ENCODE measurements at regions of chr17 and their contacts with region 1.

Region 1: DNA sequence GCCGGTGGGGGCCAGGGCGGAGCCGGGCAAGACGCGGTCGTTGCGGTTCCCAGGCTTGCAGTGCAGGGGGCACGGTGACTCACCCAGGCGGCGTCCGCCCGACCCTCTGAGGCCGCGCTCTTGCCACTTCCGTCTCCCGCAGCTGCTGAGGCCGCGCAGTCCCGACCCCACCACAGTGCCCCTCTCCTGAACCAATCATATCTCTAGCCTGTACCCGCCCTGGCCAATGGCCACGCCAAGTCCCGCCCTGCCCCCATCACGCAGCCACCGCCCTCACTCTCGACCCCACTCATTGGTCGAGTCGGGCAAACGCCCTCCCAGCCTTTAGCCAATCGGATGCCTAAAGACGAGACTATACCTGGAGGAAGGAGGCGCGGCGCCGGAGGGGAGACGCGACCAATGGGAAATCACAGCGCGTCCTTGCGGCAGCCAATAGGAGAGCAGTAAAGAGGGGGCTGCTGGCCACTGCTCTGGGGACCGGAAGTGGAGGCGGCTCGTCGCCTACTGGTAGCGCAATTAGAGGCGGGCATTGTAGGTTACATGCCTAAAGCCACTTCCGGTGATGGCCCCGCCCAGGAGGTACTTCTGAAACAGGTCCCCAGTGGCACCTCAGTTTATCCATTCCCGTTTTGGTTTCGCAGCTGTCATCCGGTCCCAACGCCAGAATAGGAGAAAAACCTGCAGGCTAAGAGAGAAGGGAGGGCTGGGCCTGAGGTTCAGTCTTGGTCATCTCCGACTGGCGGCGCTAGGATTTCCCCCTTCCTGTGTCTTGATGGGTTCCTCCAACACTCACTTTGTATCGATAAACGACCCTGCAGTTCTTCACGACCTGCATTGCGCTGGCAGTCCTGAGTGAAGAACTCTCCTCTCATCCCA is 3.5 kb upstream of the MTMR4 start:
- DNase-seq: peak; percentile 100
- ATAC-seq: peak; percentile 84
- H3K4me3 ChIP-seq: peak overlapping the region; percentile 64
- H3K27ac ChIP-seq: peak overlapping the region; percentile 80
- H3K4me1 ChIP-seq: peaks cover 12% of the 10 kb centered on the region; the same call in 1 of the 2 replicates
- H3K27me3 ChIP-seq: no peaks in the 10 kb centered on the region
- CTCF ChIP-seq: no peak
- POLR2A ChIP-seq: 0 out of 2 replicates have a peak, but pooled peaks have one; percentile 42
- RAD21 ChIP-seq: no peak

Region 2: GRCh38 chr17:58352014-58352842 is 165.7 kb before region 1 on chr17 and contains the start of gene SUPT4H1:
- CTCF ChIA-PET with region 1: no interaction called
- POLR2A ChIA-PET with region 1: no interaction called
- dilution Hi-C with region 1: no loop called
- in situ Hi-C with region 1: no loop called
- intact Hi-C with region 1: loop called (anchors 5 kb)
- DNase-seq: peak; percentile 92
- ATAC-seq: peak; percentile 87
- H3K4me3 ChIP-seq: peak within 1 kb of the TSS; percentile 94
- H3K27ac ChIP-seq: peak within 1 kb of the TSS; percentile 94
- H3K4me1 ChIP-seq: no peaks in the 10 kb centered on the region
- H3K27me3 ChIP-seq: no peaks in the 10 kb centered on the region
- CTCF ChIP-seq: no peak
- POLR2A ChIP-seq: peak; percentile 89
- RAD21 ChIP-seq: 0 out of 2 replicates have a peak, but pooled peaks have one; percentile 6
- total RNA-seq, gene SUPT4H1: 51.6 and 83.6 TPM in 2 replicates

Region 3: DNA sequence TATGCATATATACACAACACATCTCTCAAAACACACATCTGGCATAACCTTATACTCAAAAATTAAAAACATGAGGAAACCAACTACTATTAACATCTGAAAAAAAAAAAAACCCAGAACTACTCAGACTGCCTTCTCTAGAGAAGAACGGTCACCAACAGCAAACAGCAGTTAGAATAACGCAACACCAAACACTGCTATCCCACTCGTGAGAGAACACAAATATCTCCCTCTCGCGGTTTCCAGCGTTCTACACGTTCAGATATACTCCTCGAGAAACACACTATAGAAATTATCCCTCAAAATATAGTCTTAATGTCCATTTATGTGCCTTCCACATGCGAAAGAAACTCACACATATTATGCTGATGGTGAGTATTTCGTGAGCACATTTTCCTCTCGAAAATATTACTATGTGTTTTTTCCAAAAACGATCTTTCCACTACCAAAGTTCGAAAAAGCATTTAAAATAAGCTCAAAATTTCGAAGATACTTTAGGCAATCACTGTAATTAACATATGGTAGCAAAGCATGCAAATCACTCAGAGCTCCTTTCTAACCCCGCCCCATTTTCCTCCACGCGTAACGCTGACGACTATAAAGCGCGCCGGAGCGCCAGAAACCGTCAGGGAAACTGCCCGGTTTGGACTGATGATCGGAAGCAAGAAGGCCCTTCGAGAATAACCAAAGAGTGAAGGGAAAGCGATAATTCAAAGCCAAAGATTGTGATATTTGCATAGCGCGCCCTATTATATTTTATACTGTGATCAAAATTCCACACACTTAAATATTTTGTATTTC is 113.8 kb after region 1 on chr17:
- CTCF ChIA-PET with region 1: interaction called, 5 read pairs
- POLR2A ChIA-PET with region 1: interaction called, 10 read pairs
- dilution Hi-C with region 1: no loop called
- in situ Hi-C with region 1: loop called (anchors 10 kb)
- intact Hi-C with region 1: loop called (anchors 1 kb)
- DNase-seq: peak; percentile 99
- ATAC-seq: peak; percentile 94
- H3K4me3 ChIP-seq: peak overlapping the region; percentile 42; the same call in 1 of the 2 replicates
- H3K27ac ChIP-seq: peak overlapping the region; percentile 68; the same call in 1 of the 2 replicates
- H3K4me1 ChIP-seq: no peaks in the 10 kb centered on the region
- H3K27me3 ChIP-seq: no peaks in the 10 kb centered on the region
- CTCF ChIP-seq: 0 out of 2 replicates have a peak, but pooled peaks have one; percentile 22
- POLR2A ChIP-seq: peak; percentile 100
- RAD21 ChIP-seq: no peak

Region 4: DNA sequence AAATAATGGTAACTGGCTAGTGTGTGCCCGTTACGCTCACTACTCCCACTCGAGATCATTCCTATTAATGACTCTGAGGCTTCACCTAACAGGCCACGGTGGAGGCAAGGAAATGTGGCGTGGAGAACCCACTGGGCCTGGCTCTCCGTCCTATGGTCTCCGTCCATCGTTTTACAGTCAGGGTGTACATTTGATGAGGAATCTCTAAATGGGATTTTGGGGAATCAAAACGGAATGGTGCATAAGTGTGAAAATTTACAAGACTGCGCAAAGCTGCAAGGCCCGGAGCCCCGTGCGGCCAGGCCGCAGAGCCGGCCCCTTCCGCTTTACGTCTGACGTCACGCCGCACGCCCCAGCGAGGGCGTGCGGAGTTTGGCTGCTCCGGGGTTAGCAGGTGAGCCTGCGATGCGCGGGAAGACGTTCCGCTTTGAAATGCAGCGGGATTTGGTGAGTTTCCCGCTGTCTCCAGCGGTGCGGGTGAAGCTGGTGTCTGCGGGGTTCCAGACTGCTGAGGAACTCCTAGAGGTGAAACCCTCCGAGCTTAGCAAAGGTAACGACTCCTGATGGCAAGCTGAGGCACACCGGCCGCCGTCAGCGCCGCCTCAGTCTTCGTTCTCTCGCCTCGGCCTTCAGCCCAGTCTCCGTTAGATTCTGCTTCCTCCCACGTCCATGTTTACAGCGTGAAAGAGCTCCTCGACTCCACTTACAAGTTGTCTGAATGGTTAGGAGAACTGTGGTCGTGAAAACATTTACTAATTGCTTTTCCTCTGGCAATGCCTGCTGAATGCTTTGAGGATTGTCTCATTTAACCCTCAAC is 174.5 kb after region 1 on chr17 and contains the start of gene RAD51C:
- CTCF ChIA-PET with region 1: no interaction called
- POLR2A ChIA-PET with region 1: interaction called, 3 read pairs
- dilution Hi-C with region 1: no loop called
- in situ Hi-C with region 1: no loop called
- intact Hi-C with region 1: loop called (anchors 1 kb)
- DNase-seq: peak; percentile 83
- ATAC-seq: peak; percentile 99
- H3K4me3 ChIP-seq: peak within 1 kb of the TSS; percentile 93
- H3K27ac ChIP-seq: peak within 1 kb of the TSS; percentile 67
- H3K4me1 ChIP-seq: peaks cover 3% of the 10 kb centered on the region
- H3K27me3 ChIP-seq: no peaks in the 10 kb centered on the region
- CTCF ChIP-seq: no peak
- POLR2A ChIP-seq: peak; percentile 26; the same call in 1 of the 2 replicates
- RAD21 ChIP-seq: no peak
- total RNA-seq, gene RAD51C: 21.1 and 28.6 TPM in 2 replicates

Region 5: GRCh38 chr17:58786613-58787295 is 268.8 kb after region 1 on chr17:
- CTCF ChIA-PET with region 1: no interaction called
- POLR2A ChIA-PET with region 1: no interaction called
- dilution Hi-C with region 1: no loop called
- in situ Hi-C with region 1: no loop called
- intact Hi-C with region 1: loop called (anchors 10 kb)
- DNase-seq: peak; percentile 87
- ATAC-seq: peak; percentile 32
- H3K4me3 ChIP-seq: no peak overlapping the region
- H3K27ac ChIP-seq: peak overlapping the region; percentile 8; the same call in 1 of the 2 replicates
- H3K4me1 ChIP-seq: no peaks in the 10 kb centered on the region
- H3K27me3 ChIP-seq: peaks cover 3% of the 10 kb centered on the region; the same call in 1 of the 2 replicates
- CTCF ChIP-seq: no peak
- POLR2A ChIP-seq: no peak
- RAD21 ChIP-seq: no peak

Region 6: GRCh38 chr17:59004338-59005111 is 486.6 kb after region 1 on chr17:
- CTCF ChIA-PET with region 1: interaction called, 8 read pairs
- POLR2A ChIA-PET with region 1: no interaction called
- dilution Hi-C with region 1: no loop called
- in situ Hi-C with region 1: loop called (anchors 5 kb)
- intact Hi-C with region 1: loop called (anchors 1 kb)
- DNase-seq: peak; percentile 53
- ATAC-seq: peak; percentile 78
- H3K4me3 ChIP-seq: no peak overlapping the region
- H3K27ac ChIP-seq: no peak overlapping the region
- H3K4me1 ChIP-seq: peaks cover 5% of the 10 kb centered on the region
- H3K27me3 ChIP-seq: no peaks in the 10 kb centered on the region
- CTCF ChIP-seq: peak; percentile 89
- POLR2A ChIP-seq: peak; percentile 45; the same call in 1 of the 2 replicates
- RAD21 ChIP-seq: peak; percentile 94

Measured in IMR-90 (cell line).